HEK293T (cell line): ENCODE measurements at regions of chr22 and their contacts with region 1.

Region 1: DNA sequence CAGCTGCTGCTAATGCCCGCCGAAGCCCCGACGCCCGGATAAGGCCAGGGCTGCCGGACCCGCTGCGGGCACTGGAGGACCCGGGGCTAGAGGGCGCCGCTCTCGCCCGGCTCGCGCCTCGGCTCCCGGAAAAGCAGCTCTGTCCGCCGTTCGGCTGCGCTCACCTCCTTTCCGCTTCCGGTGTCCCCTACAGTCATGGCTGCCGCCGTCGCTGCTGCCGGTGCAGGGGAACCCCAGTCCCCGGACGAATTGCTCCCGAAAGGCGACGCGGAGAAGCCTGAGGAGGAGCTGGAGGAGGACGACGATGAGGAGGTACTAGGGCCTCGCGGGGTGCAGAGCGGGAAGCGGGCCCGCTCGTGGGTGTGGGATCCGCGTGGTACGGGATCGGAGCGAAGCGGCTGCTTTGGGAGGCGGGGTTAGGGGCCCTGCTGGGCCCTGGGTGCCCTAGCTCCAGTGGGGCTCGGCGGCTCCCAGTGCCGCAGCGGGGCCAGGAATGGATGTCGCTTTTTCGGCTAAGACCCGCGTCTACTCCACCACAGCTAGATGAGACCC is at the start of gene TOMM22:
- DNase-seq: peak; percentile 98

Region 2: GRCh38 chr22:38705235-38706100 is 23.6 kb after region 1 on chr22 and contains the start of gene GTPBP1:
- CTCF ChIA-PET with region 1: no interaction called
- POLR2A ChIA-PET with region 1: interaction called, 65 read pairs
- DNase-seq: peak; percentile 98